ENCODE measurements at regions of chr6 and their contacts with region 1.

Region 1: GRCh38 chr6:79536954-79537747 is at the start of gene LCA5:
- DNase-seq: peak; percentile 96
- H3K4me3 Mint-ChIP-seq: no peak within 1 kb of the TSS
- H3K27ac Mint-ChIP-seq: no peak within 1 kb of the TSS
- H3K4me1 Mint-ChIP-seq: no peaks in the 10 kb centered on the region
- H3K27me3 Mint-ChIP-seq: peaks cover 16% of the 10 kb centered on the region
- total RNA-seq, gene LCA5: 0.05 and 0.07 TPM in 2 replicates

Region 2: DNA sequence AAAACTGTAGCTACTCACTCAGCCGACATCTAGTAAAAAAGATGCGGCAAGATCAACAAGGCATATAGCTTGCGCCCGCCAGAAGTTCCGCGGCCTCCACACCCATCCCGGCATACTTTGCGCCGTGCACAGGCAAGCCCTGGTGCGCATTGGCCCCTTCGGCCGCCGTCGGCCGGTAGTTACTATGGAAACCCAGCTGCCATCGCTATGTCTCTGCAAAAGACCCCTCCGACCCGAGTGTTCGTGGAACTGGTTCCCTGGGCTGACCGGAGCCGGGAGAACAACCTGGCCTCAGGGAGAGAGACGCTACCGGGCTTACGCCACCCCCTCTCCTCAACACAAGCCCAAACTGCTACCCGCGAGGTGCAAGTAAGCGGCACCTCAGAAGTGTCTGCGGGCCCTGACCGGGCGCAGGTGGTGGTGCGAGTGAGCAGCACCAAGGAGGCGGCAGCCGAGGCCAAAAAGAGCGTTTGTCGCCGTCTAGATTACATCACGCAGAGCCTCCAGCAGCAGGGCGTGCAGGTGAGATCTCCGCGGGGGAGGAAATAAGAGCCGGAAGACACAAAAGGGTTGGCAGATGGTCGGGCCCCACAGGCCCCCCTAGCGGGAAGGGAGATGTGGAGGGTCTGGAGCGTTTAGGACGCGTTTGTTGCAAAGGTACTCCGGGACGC is 669.6 kb before region 1 on chr6 and contains the start of gene IRAK1BP1:
- intact Hi-C with region 1: loop called (anchors 2 kb)
- DNase-seq: peak; percentile 95
- H3K4me3 Mint-ChIP-seq: peak within 1 kb of the TSS; percentile 97
- H3K27ac Mint-ChIP-seq: peak within 1 kb of the TSS; percentile 97
- H3K4me1 Mint-ChIP-seq: peaks cover 22% of the 10 kb centered on the region
- H3K27me3 Mint-ChIP-seq: peaks cover 4% of the 10 kb centered on the region
- total RNA-seq, gene IRAK1BP1: 3.4 and 3.6 TPM in 2 replicates

Region 3: DNA sequence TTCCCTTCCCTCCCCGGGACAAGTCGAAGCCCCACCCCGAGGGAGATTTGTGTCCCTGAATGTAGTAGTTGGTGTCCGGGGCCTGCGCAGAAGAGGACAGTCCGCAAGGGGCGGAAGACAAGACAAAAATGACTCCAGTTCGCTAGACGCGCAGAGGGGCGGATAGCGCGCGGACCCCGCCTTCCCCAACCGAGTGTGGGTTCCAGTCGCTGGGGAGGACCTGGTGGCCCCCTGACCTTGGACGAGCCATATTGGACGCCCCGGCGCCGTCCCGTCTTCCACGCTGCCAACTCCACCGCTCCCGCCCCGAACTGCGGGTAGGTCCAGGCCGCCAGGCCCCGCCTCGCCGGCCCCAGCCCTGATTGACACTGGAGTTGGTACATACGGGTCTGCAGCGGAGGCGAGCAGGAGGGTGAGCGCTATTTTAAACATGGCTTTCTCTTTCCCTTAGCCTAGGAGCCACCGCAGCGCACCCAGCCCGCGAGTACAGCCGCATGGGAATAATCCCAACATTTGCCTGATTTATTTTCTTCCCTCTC is 303.5 kb before region 1 on chr6:
- intact Hi-C with region 1: loop called (anchors 1 kb)
- DNase-seq: peak; percentile 93
- H3K4me3 Mint-ChIP-seq: peak overlapping the region; percentile 92
- H3K27ac Mint-ChIP-seq: peak overlapping the region; percentile 94
- H3K4me1 Mint-ChIP-seq: peaks cover 21% of the 10 kb centered on the region
- H3K27me3 Mint-ChIP-seq: peaks cover 2% of the 10 kb centered on the region